Gastrocnemius medialis (tissue), 4 donors: ENCODE measurements at regions of chr4 and their contacts with region 1.

Region 1: DNA sequence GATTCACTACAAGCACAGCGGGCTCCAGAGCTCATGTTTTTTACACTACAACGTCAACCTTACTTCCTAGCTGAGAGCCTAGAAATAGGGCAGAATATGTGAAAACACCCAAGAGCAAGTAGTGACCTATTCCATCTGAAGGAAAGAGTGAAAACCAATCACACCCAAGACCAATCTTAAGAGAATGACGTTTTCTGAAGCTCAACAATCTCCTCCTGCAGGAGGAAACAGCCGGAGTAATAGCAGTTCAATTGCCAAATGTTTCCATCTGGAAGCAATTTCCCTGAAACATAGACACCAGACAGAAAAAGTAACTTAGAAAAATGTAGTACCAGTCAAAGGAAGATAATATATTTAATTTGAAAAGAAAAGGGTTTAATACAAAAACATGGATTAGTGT is 142.4 kb downstream of the ANXA5 start:
- DNase-seq: no peak
- ATAC-seq: peak in 1 of 2 donors; percentile 44
- H3K4me3 ChIP-seq: no peak overlapping the region
- H3K27ac ChIP-seq: peak overlapping the region in 2 of 4 donors; percentile 17 to 59
- H3K4me1 ChIP-seq: peaks cover 0 to 4% of the 10 kb centered on the region in 2 donors
- H3K27me3 ChIP-seq: no peaks in the 10 kb centered on the region
- CTCF ChIP-seq: no peak
- POLR2A ChIP-seq: no peak

Region 2: DNA sequence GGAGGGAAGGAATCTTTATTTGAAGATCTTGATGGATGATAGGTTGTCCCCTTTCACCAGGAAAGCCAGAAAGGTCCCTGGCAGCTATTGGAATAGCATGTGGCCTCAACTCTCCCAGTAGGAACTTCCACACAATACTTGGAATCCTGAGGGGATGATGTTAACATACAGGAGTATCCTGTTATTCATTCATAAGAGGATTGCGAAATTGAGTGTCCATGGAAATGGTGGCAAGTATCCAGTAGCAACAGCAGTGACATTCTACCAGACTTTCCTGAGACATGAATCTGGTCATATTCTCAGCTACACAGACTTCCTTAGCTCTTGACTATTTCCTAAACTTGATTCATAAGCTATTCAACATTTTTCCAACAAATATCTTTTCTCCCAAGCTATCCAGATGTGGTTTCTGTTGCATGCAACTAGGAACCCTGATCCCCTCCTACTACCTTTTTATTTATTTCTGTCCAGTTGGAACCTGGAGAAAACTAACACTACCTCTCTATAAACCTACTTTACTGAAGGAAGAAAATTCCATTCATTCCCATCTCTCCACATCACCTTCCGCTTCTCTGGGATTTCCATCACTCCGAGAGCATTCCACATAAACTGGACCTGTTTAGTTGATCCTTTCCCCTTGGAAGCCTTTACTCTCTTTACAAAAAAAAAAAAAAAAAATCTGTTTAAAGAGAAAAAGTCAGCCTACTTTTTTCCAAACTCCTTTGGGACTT is 40.6 kb after region 1 on chr4:
- in situ Hi-C with region 1: no loop called
- intact Hi-C with region 1: loop called (anchors 1 kb)
- DNase-seq: no peak
- ATAC-seq: peak; percentile 74 to 88
- H3K4me3 ChIP-seq: no peak overlapping the region
- H3K27ac ChIP-seq: peak overlapping the region; percentile 6 to 67 (median 52)
- H3K4me1 ChIP-seq: peaks cover 0 to 4% of the 10 kb centered on the region in 2 donors
- H3K27me3 ChIP-seq: no peaks in the 10 kb centered on the region
- CTCF ChIP-seq: no peak
- POLR2A ChIP-seq: no peak